ENCODE measurements at regions of chr17 and their contacts with region 1.

Region 1: DNA sequence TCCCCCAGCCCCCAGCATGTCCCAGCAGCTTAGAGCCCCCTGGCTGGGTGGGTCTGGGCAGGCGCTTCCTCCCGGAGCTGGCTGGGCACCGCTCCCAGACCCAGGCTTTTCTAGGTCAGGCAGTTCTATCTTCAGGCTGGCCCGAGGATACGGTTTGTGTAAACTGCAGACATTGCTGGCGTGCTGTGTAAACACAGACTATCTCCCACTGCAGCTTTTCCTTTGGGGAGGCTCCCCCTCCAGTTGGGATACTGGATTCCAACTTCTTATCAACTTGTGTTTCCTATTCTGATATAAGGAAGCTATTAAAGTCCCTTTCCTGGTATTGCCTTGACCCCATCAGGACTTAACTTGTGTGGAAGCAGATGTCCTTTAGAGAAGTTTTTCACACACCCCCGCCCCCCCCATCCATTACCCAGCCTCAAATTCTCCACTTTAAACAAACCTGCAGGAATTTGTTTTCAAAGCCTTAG is 18.3 kb upstream of the GNA13 start:
- DNase-seq: peak; percentile 91
- H3K4me3 ChIP-seq: no peak overlapping the region
- H3K27ac ChIP-seq: peak overlapping the region in 1 of 2 experiments; percentile 58; a peak in 2 of 4 replicates
- H3K4me1 ChIP-seq: peaks cover 9 to 13% of the 10 kb centered on the region in 2 experiments; a peak in 2 of 4 replicates
- H3K27me3 ChIP-seq: no peaks in the 10 kb centered on the region
- CTCF ChIP-seq: no peak
- EP300 ChIP-seq: no peak
- RAD21 ChIP-seq: peak; percentile 34

Region 2: DNA sequence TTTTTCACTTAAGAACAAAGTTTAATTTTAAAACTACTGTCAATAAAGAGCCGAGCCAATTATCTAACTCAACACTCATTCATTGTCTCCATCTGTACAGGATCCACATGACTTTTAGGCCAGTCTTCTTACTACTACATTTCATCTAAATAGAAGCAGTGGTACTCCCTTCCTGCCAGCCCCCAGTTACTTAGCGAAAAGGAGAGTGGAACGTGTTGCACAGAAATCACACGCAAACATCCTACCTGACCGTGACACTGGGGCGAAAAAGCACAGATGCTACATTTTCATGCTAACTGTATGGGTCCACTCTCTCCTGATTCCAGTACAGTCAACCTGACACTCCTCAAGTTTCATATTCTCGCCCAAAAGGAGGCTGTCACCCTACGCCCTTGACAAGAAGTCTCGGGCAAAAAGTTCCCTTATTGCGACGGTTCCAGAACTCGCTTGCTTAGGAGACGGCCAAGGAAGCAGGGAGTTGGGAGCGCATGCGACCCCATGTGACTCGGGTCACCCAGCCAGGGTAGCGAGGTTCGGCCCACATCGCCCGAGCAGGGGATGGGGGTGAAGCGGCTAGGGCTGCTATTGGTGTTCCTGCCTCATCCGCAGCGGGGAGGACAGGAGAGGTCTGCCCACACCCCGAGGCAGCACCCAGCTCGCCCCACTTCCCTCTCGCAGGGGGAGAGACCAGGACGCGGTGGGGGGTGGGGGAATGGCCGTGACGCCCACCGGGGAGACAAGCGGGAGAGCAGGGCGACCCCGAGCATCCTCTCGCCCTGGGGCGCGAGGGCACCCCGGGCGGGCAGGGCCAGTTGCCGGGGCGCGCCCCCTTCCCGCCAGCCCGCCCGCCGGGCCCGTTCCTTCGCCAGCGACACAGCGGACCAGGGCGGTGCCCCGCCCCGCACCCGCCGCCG is 19.2 kb before region 1 on chr17:
- CTCF ChIA-PET with region 1: no interaction called
- POLR2A ChIA-PET with region 1: interaction called, 12 read pairs
- DNase-seq: peak; percentile 83
- H3K4me3 ChIP-seq: peak overlapping the region; percentile 74 to 77
- H3K27ac ChIP-seq: peak overlapping the region; percentile 94 to 96
- H3K4me1 ChIP-seq: peaks cover 6 to 10% of the 10 kb centered on the region in 2 experiments; a peak in 2 of 4 replicates
- H3K27me3 ChIP-seq: no peaks in the 10 kb centered on the region
- CTCF ChIP-seq: no peak
- EP300 ChIP-seq: no peak
- RAD21 ChIP-seq: no peak

Region 3: DNA sequence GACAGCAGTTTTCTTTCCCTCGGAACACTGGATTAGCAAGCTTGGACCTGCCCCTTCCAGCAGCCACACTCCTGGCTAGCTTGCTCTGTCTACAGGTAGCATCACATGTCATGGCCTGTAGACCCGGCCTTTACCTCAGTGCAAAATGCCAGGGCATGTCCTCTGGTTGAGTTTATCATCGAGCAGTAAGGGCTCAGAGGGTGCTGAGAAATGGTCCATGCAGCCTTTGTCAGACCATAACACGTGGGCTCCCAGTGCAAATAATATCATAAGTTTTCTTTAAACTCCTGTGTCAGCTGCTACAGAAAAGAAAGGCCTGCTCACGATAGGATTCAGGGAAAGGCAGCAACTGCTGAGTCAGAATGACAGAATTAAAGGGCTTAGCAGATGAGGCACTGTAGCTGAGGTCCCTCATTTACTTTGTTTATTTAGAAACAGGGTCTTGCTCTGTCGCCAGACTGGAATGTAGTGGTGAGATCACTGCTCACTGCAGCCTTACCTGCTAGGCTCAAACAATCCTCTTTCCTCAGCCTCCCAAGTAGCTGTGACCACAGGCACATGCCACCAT is 10.3 kb before region 1 on chr17:
- CTCF ChIA-PET with region 1: interaction called, 12 read pairs
- POLR2A ChIA-PET with region 1: interaction called, 4 read pairs
- DNase-seq: no peak
- H3K4me3 ChIP-seq: no peak overlapping the region
- H3K27ac ChIP-seq: peak overlapping the region in 1 of 2 experiments; percentile 29; a peak in 2 of 4 replicates
- H3K4me1 ChIP-seq: peaks cover 0 to 7% of the 10 kb centered on the region in 2 experiments; a peak in 2 of 4 replicates
- H3K27me3 ChIP-seq: no peaks in the 10 kb centered on the region
- CTCF ChIP-seq: no peak
- EP300 ChIP-seq: no peak
- RAD21 ChIP-seq: no peak

Measured in SK-N-SH (cell line).